ENCODE measurements at regions of chr5 and their contacts with region 1.

Region 1: DNA sequence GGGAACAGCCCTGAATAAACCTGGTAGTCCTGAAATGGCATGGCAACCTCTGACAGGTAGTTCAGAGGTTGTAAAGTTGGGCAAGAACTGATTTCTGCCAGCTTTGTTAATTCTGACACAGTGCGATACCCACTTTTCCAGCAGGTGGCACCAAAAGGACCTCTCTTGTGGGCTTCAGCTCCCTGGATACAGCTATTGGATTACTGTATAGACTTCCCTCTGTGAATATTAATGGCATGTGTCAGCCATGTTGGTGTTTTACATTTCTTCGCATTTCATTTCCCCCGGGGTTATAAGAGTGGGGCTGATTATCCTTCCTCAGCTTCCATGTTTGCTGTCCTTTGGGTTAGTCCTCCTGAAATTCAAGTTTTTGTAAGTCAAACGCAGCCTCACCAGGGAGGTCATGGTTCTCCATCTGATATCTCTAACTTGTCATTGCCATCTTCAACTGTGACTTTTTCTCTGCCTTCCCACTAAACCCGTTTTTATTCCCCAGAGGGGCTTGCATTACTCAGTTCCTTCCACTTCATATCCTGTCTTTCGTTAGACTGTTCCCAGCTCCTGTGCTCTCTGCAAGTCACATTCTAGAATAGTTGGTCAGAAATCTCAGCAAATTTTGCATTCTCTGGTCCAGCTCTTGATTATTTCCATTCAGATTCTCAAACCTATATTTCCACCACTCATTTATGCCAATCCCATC is 135.6 kb downstream of the LIFR start:
- DNase-seq: peak; percentile 29
- CTCF ChIP-seq: peak; percentile 41

Region 2: DNA sequence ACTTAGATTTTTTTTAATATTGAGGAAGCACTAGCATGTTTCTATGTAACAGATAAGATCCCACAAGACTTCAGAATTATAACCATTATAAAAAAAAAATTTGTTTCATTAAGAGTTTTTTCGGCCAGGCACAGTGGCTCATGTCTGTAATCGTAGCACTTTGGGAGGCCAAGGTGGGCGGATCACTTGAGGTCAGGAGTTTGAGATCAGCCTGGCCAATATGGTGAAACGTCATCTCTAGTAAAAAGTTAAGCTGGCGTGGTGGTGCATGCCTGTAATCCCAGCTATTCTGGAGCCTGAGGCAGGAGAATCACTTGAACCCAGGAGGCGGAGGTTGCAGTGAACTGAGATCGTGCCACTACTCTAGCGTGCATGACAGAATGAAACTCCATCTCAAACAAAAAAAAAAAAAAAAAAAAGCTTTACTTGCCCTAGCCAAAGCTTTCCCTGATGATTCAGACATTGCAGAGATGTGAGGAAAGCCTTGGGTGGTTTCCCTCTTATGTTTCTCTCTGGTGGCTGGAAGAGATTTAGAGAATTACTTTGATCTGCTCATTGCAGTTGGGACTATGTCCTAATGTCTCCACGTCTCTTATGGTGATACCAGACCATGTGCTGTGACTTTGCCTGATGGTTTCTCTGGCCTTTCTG is 97.1 kb before region 1 on chr5:
- CTCF ChIA-PET with region 1: no interaction called
- POLR2A ChIA-PET with region 1: no interaction called
- DNase-seq: no peak
- CTCF ChIP-seq: no peak

Region 3: DNA sequence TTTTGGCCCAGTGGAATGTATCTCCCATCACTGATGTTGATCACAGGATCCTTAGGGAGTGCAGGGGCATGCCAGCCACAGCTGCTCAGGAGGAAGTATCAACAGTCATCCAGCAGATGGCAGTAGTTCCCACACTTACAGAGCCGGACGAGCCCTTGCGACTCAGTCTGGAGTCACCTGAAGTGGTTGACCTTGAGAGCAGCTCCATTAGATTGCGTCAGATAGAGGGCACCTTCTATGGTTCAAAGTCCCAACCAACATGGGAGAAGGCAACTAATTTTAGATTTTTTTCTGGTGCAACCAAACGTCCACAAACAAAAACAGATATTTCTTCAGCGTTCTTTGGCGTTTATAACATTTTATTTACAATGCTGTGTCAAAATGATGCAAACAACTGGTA is 37.9 kb before region 1 on chr5:
- CTCF ChIA-PET with region 1: interaction called, 14 read pairs
- POLR2A ChIA-PET with region 1: no interaction called
- DNase-seq: peak; percentile 59
- CTCF ChIP-seq: peak; percentile 71

Region 4: GRCh38 chr5:38410304-38410990 is 10.4 kb before region 1 on chr5:
- CTCF ChIA-PET with region 1: interaction called, 21 read pairs
- POLR2A ChIA-PET with region 1: no interaction called
- DNase-seq: no peak
- CTCF ChIP-seq: no peak

Region 5: GRCh38 chr5:38433160-38433861 is 12.5 kb after region 1 on chr5:
- CTCF ChIA-PET with region 1: interaction called, 20 read pairs
- POLR2A ChIA-PET with region 1: no interaction called
- DNase-seq: no peak
- CTCF ChIP-seq: no peak

Region 6: DNA sequence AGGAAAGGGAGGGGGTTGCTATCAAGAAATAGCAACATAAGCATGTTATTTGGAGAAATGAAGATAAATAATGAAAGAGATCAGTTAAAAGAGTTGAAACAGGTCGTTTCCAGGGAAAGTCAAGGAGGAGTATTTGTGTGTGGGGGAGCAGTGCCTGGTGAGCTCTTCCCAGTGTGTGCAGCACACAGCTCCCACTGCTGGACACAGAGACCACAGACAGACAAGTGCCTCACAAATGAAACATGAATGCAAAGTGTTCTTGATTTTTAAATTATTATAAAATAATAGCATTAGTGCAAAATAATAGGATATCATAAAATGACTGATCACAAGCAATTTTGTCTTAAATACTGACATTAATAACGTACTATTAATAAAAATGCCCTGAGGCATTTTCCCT is 94.8 kb after region 1 on chr5:
- CTCF ChIA-PET with region 1: no interaction called
- POLR2A ChIA-PET with region 1: no interaction called
- DNase-seq: no peak
- CTCF ChIP-seq: no peak

Region 7: DNA sequence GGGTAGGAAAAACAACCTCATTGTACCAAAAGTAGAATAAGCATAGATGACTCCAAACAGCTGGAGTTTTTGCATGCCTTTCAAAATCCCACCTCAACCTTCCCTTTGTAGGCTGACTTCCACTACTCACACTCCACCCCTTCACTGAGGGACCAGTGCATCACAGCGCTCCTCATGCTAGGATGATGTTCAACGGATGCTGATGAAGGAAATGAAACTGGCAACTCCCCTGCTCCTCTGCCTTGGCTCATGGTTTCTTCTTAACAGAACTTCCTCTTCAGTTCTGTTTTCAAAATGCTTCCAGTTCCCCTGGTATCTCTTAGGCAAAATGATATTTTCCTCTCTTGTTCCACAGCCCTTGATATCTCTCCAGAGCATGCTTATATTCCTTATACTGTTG is 106.6 kb after region 1 on chr5:
- CTCF ChIA-PET with region 1: no interaction called
- POLR2A ChIA-PET with region 1: no interaction called
- DNase-seq: no peak
- CTCF ChIP-seq: no peak

Region 8: GRCh38 chr5:38809388-38810359 is 388.8 kb after region 1 on chr5:
- CTCF ChIA-PET with region 1: interaction called, 50 read pairs
- POLR2A ChIA-PET with region 1: no interaction called
- DNase-seq: peak; percentile 68
- CTCF ChIP-seq: peak; percentile 53

Region 9: GRCh38 chr5:38922199-38922598 is 501.4 kb after region 1 on chr5:
- CTCF ChIA-PET with region 1: interaction called, 10 read pairs
- POLR2A ChIA-PET with region 1: no interaction called
- DNase-seq: peak; percentile 67
- CTCF ChIP-seq: peak; percentile 71